ENCODE measurements at regions of chrX and their contacts with region 1.

Region 1: DNA sequence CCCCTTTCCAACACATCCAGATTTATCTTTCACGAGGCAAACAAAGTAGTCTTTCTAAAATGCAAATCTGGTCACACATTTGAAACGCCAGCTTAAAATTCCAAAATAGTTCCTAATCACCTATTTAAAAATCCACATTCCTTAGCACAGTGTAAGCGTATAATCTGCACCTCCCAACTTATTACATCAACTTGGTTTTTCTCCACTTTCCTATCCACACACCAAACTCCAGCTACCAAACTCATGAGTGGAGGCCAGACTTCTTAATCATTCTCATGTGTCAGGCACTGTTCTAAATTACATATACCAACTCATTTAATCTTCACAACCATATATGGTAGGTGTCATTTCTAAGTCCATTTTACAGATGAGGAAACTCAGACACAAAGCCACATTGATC is 33.8 kb downstream of the ENOX2 start:
- DNase-seq: no peak
- H3K4me3 ChIP-seq: no peak overlapping the region
- H3K27ac ChIP-seq: no peak overlapping the region
- H3K4me1 ChIP-seq: no peaks in the 10 kb centered on the region
- H3K27me3 ChIP-seq: no peaks in the 10 kb centered on the region
- CTCF ChIP-seq: no peak
- EP300 ChIP-seq: no peak
- POLR2A ChIP-seq: no peak

Region 2: DNA sequence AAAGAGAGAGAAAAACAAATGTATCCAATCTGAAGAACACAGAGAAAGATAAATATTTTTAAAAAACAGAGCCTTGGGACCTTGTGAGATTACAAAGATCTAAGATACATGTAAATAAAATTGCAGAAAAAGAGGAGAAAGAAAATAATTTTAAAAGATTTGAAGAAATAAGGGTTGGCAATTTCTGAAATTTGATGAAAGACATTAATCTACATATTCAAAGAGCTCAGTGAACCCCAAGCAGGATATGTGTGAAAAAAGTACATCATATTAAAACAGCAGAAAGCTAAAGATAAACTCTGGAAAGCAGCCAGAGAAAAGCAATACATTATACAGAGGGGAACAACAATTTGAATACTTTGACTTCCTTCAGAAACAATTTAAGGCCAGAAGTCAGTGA is 210.9 kb before region 1 on chrX:
- intact Hi-C with region 1: no loop called
- DNase-seq: no peak
- H3K4me3 ChIP-seq: no peak overlapping the region
- H3K27ac ChIP-seq: no peak overlapping the region
- H3K4me1 ChIP-seq: no peaks in the 10 kb centered on the region
- H3K27me3 ChIP-seq: no peaks in the 10 kb centered on the region
- CTCF ChIP-seq: no peak
- EP300 ChIP-seq: no peak
- POLR2A ChIP-seq: no peak

Region 3: DNA sequence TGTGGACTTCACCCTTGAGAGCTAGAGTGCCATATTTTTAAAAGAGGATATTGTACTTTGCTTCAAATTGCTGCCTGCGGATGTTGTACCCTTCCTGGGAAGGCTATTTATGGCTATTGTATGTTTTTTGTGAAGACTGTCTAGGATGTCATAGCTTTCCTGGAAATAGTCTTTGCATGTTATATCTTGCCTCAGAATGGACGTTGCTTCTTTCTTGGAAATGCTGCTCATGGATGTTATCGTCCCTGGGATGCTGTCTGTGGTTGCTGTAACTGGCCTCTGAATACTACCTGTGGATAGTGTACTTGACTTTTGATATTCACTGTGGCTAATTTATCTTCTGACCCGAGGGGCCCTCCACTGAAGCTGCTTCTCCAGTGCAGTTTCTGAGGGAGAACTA is 113.0 kb before region 1 on chrX:
- intact Hi-C with region 1: no loop called
- DNase-seq: no peak
- H3K4me3 ChIP-seq: no peak overlapping the region
- H3K27ac ChIP-seq: no peak overlapping the region
- H3K4me1 ChIP-seq: no peaks in the 10 kb centered on the region
- H3K27me3 ChIP-seq: no peaks in the 10 kb centered on the region
- CTCF ChIP-seq: no peak
- EP300 ChIP-seq: no peak
- POLR2A ChIP-seq: no peak

Region 4: DNA sequence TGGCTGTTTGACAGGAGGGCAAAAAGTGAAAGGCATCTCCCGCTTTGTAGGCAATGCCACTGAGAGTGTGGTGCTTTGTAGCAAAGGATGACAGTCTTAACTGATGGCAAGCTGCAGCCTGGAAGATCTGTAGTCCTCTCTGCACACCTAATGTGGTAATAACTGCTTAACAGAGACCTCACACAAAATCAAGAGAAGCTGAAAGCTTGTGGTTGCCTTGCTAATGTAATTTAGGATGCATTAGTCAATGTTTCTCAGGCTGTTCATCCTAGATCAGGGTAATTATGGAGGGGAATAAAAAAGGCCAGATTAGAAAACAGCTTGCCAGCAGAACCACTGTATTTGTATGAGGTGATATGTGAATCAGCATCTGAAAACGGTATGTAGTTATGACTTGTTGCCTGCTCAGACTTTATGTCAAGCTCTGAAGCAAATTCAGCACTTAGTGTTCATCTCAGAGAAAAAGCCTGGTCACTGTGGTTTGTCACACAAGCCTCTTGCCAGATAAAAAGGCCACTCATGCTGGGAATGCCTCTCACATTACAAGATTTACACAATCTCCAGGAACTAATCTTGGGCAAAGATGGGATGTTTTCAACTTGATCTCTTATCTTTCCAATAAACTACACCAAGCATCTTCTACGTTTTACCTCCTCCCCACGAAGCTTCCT is 97.0 kb before region 1 on chrX:
- intact Hi-C with region 1: loop called in 1 of 4 experiments (anchors 10 kb)
- DNase-seq: no peak
- H3K4me3 ChIP-seq: no peak overlapping the region
- H3K27ac ChIP-seq: no peak overlapping the region
- H3K4me1 ChIP-seq: no peaks in the 10 kb centered on the region
- H3K27me3 ChIP-seq: no peaks in the 10 kb centered on the region
- CTCF ChIP-seq: no peak
- EP300 ChIP-seq: no peak
- POLR2A ChIP-seq: no peak

Measured in ovary (tissue), 10 donors.